Caco-2 (cell line): ENCODE measurements at regions of chr19 and their contacts with region 1.

Region 1: DNA sequence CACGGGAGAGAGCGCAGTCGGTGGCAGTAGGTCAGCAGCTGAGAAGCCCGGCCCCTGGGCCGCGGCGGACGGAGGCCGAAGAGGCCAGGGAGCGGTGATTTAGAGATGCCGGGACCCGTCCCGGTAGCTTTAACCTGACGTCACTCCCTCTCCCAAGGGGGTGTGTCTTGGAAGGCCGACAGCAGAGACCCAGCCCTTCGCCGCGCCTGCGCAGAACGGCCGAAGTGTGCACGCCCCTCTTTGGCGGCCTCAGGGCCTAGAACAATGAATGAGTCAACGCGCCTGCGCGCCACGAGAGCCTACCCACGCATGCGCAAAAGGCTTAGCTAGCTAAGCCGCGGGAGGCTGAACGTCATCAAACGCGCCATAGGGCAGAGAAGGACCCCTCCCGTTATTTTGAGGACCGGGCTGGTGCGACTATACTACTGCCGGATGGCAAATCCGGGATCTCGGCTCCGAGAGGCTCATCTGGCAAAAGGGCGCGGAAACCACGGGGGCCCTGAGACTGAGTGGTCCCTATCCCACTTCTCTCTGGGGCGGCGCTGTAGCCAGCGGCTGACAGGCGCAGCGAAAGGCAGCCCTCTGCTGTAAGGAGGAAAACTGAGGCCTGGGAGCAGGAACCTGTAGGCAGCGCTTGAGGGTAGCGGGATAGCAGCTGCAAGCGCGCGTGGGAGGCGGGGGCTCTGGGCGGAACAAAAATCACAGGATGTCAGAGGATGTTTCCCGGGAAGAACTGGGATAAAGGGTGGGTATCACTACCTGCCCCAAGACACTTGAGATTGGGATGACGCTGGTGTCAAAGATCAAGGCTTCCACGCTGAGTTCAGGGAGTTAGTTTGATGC is at the starts of genes IRGQ and ZNF576:
- DNase-seq: peak; percentile 100
- H3K4me3 ChIP-seq: peak within 1 kb of the TSS; percentile 73
- H3K4me3 Mint-ChIP-seq: peak within 1 kb of the TSS; percentile 97
- H3K27ac Mint-ChIP-seq: peak within 1 kb of the TSS; percentile 95
- H3K4me1 ChIP-seq: peaks cover 6% of the 10 kb centered on the region; the same call in 1 of the 2 replicates
- H3K4me1 Mint-ChIP-seq: peaks cover 7% of the 10 kb centered on the region
- H3K27me3 ChIP-seq: no peaks in the 10 kb centered on the region
- H3K27me3 Mint-ChIP-seq: no peaks in the 10 kb centered on the region
- CTCF ChIP-seq: peak in 1 of 2 experiments; percentile 9
- total RNA-seq, gene IRGQ: 27.7 and 30.1 TPM in 2 replicates
- total RNA-seq, gene ZNF576: 13.2 and 16.9 TPM in 2 replicates

Region 2: DNA sequence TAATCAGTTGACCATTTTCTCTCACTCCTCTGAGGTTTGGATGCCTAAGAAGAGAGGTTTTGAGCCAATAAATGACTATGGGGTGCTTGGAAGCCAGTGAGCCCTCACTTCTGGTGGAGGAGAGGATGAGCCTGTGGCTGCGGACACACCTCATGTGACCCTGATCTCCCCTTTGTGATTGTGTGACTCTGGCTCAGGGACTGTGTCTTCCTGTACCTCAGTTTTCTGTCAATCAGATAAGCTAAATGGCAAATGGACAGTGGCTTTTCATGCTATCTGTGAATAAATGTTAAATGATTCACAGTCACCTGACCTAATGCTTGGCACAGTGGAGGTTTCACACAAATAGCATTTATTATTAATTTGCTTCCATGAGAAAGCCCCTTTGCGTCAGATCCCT is 833.4 kb before region 1 on chr19:
- CTCF ChIA-PET with region 1: no interaction called
- POLR2A ChIA-PET with region 1: no interaction called
- intact Hi-C with region 1: no loop called
- DNase-seq: no peak
- H3K4me3 ChIP-seq: no peak overlapping the region
- H3K4me3 Mint-ChIP-seq: no peak overlapping the region
- H3K27ac Mint-ChIP-seq: no peak overlapping the region
- H3K4me1 ChIP-seq: peaks cover 10% of the 10 kb centered on the region; the same call in 1 of the 2 replicates
- H3K4me1 Mint-ChIP-seq: no peaks in the 10 kb centered on the region
- H3K27me3 ChIP-seq: no peaks in the 10 kb centered on the region
- H3K27me3 Mint-ChIP-seq: no peaks in the 10 kb centered on the region
- CTCF ChIP-seq: no peak

Region 3: GRCh38 chr19:43532962-43533545 is 63.2 kb before region 1 on chr19 and contains the start of gene ZNF575:
- CTCF ChIA-PET with region 1: interaction called, 12 read pairs
- POLR2A ChIA-PET with region 1: interaction called, 10 read pairs
- intact Hi-C with region 1: loop called (anchors 1 kb)
- DNase-seq: peak; percentile 95 to 96
- H3K4me3 ChIP-seq: peak within 1 kb of the TSS; percentile 60
- H3K4me3 Mint-ChIP-seq: peak within 1 kb of the TSS; percentile 96
- H3K27ac Mint-ChIP-seq: peak within 1 kb of the TSS; percentile 96
- H3K4me1 ChIP-seq: 0 out of 2 replicates have a peak, but pooled peaks cover 4% of the 10 kb centered on the region
- H3K4me1 Mint-ChIP-seq: peaks cover 6% of the 10 kb centered on the region
- H3K27me3 ChIP-seq: no peaks in the 10 kb centered on the region
- H3K27me3 Mint-ChIP-seq: no peaks in the 10 kb centered on the region
- CTCF ChIP-seq: peak in 1 of 2 experiments; percentile 9
- total RNA-seq, gene ZNF575: 1.00 and 1.2 TPM in 2 replicates

Region 4: GRCh38 chr19:43560687-43561086 is 35.5 kb before region 1 on chr19:
- CTCF ChIA-PET with region 1: interaction called, 27 read pairs
- POLR2A ChIA-PET with region 1: no interaction called
- intact Hi-C with region 1: loop called (anchors 2 kb)
- DNase-seq: peak; percentile 54 to 55
- H3K4me3 ChIP-seq: no peak overlapping the region
- H3K4me3 Mint-ChIP-seq: no peak overlapping the region
- H3K27ac Mint-ChIP-seq: no peak overlapping the region
- H3K4me1 ChIP-seq: no peaks in the 10 kb centered on the region
- H3K4me1 Mint-ChIP-seq: no peaks in the 10 kb centered on the region
- H3K27me3 ChIP-seq: no peaks in the 10 kb centered on the region
- H3K27me3 Mint-ChIP-seq: no peaks in the 10 kb centered on the region
- CTCF ChIP-seq: peak in 1 of 2 experiments; percentile 37

Region 5: GRCh38 chr19:43619262-43620060 is 23.2 kb after region 1 on chr19 and contains the start of gene ZNF428:
- CTCF ChIA-PET with region 1: no interaction called
- POLR2A ChIA-PET with region 1: no interaction called
- intact Hi-C with region 1: loop called (anchors 1 kb)
- DNase-seq: peak; percentile 91 to 95
- H3K4me3 ChIP-seq: peak within 1 kb of the TSS; percentile 90
- H3K4me3 Mint-ChIP-seq: peak within 1 kb of the TSS; percentile 96
- H3K27ac Mint-ChIP-seq: peak within 1 kb of the TSS; percentile 100
- H3K4me1 ChIP-seq: peaks cover 4% of the 10 kb centered on the region; the same call in 1 of the 2 replicates
- H3K4me1 Mint-ChIP-seq: peaks cover 8% of the 10 kb centered on the region
- H3K27me3 ChIP-seq: no peaks in the 10 kb centered on the region
- H3K27me3 Mint-ChIP-seq: no peaks in the 10 kb centered on the region
- CTCF ChIP-seq: no peak
- total RNA-seq, gene ZNF428: 38.9 and 39.5 TPM in 2 replicates

Region 6: GRCh38 chr19:43658494-43658893 is 62.3 kb after region 1 on chr19:
- CTCF ChIA-PET with region 1: no interaction called
- POLR2A ChIA-PET with region 1: no interaction called
- intact Hi-C with region 1: no loop called
- DNase-seq: no peak
- H3K4me3 ChIP-seq: no peak overlapping the region
- H3K4me3 Mint-ChIP-seq: no peak overlapping the region
- H3K27ac Mint-ChIP-seq: no peak overlapping the region
- H3K4me1 ChIP-seq: no peaks in the 10 kb centered on the region
- H3K4me1 Mint-ChIP-seq: no peaks in the 10 kb centered on the region
- H3K27me3 ChIP-seq: no peaks in the 10 kb centered on the region
- H3K27me3 Mint-ChIP-seq: no peaks in the 10 kb centered on the region
- CTCF ChIP-seq: no peak

Region 7: DNA sequence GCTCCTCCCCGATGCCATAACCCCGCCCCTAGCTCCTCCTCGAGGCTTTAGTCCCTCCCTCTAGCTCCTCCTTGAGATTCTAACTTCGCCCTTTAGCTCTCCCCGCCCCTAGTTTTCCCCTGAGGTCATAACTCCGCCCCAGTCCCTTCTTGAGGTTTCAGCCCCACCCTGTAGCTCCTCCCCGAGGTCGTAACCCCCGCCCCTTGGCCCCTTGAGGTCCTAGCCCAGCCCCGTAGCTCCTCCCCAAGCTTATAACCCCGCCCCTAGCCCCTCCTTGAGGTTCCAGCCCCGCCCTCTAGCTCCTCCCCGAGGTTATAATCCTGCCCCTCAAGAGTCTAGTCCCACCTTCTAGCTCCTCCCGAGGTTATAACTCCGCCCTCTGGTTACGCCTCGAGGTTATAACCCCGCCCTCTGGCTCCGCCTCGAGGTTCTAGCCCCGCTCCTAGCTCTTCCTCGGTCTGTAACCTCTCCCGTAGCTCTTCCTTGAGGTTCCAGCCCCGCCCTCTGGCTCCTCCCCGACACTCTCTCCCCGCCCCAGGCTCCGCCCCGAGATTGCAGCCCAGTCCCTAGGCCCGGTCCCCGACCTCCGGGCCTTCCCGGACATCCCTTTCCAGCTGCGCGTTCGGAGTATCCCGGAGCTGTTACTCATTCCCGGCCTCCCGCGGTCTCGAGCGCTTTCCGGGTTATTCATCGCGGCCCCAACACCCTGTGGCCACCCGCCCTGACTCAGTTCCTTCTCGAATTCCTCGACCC is 72.4 kb after region 1 on chr19:
- CTCF ChIA-PET with region 1: interaction called, 15 read pairs
- POLR2A ChIA-PET with region 1: interaction called, 9 read pairs
- intact Hi-C with region 1: no loop called
- DNase-seq: peak; percentile 96 to 98
- H3K4me3 ChIP-seq: peak overlapping the region; percentile 33
- H3K4me3 Mint-ChIP-seq: peak overlapping the region; percentile 81
- H3K27ac Mint-ChIP-seq: peak overlapping the region; percentile 50
- H3K4me1 ChIP-seq: peaks cover 19% of the 10 kb centered on the region
- H3K4me1 Mint-ChIP-seq: peaks cover 7% of the 10 kb centered on the region
- H3K27me3 ChIP-seq: no peaks in the 10 kb centered on the region
- H3K27me3 Mint-ChIP-seq: peaks cover 8% of the 10 kb centered on the region
- CTCF ChIP-seq: no peak